ENCODE measurements at regions of chr22 and their contacts with region 1.

Region 1: GRCh38 chr22:22884010-22884887 is 3.4 kb upstream of the IGLL5 start:
- DNase-seq: peak; percentile 80 to 88 (median 82)
- H3K4me3 ChIP-seq: no peak overlapping the region
- H3K27ac ChIP-seq: no peak overlapping the region
- H3K4me1 ChIP-seq: peaks cover 0 to 7% (median 1%) of the 10 kb centered on the region in 4 experiments
- H3K27me3 ChIP-seq: peaks cover 0 to 8% (median 0%) of the 10 kb centered on the region in 5 experiments

Region 2: DNA sequence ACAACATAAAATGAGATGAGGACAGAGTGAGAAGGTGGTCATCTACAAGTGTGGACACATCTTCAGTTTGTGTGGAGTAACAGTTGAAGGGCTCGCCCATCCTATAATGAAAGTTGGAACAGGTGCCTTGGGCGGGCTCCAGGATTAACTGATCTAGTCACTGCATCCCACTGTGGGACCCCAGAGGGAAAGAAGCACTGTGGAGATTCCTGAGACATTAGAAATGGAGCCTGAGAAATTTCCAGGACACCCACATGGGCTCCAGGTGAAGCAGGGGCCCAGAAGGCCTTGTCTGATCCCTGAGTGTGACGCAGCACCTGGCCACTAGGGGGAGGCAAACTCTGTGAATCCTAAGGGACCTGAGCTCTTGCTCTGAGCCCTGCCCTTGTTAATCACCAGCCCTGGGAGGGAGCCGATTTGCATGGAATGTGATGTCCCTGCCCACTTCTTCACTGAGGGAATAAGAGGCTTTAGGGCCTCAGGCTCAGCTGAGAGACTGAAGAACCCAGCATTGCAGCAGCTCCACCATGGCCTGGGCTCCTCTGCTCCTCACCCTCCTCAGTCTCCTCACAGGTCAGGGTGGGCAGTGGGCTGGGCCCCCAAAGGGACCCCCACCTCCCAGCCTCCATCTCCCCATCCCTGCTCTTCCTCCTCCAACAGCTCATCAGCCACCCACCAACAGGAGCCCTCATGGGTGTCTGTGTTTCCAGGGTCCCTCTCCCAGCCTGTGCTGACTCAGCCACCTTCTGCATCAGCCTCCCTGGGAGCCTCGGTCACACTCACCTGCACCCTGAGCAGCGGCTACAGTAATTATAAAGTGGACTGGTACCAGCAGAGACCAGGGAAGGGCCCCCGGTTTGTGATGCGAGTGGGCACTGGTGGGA is 541.3 kb before region 1 on chr22:
- CTCF ChIA-PET with region 1: no interaction called
- POLR2A ChIA-PET with region 1: no interaction called
- DNase-seq: peak; percentile 35 to 43 (median 39)
- H3K4me3 ChIP-seq: no peak overlapping the region
- H3K27ac ChIP-seq: no peak overlapping the region
- H3K4me1 ChIP-seq: peaks cover 0 to 31% (median 21%) of the 10 kb centered on the region in 4 experiments
- H3K27me3 ChIP-seq: no peaks in the 10 kb centered on the region

Region 3: DNA sequence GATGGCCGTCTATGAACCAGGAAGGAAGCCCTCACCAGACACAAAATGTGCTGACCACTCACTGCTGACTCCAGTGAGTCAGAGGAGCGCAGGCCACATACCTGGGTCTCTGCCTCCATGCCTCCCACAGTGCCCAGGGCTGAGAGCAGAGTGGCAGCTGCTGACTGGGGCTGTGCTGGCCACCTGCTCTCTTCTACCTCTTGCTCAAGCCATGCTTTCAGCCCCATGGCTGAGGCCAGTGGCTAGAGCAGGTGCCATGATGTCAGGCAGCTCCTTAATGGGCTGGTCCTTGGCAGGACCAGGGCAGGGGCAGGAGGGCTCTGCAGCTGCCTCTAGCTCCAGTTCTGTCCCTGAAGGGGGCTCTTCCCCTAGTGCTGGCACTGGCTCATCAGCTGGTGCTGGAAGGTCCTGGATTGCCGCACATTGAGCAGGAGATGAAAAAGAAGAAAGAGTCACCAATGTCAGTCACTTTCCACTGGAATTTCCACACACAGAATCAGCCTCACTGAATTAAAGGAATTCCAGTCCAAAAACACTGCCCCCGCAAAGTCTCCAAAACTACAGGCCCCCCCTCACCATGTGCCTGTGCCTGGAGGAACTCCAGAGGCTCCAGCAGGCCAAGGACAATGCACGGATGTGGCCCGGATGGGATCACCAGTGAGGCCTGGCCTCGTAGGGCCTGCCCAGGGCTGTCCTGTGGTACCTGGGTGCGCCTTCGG is 153.4 kb before region 1 on chr22:
- CTCF ChIA-PET with region 1: no interaction called
- POLR2A ChIA-PET with region 1: no interaction called
- DNase-seq: no peak
- H3K4me3 ChIP-seq: no peak overlapping the region
- H3K27ac ChIP-seq: no peak overlapping the region
- H3K4me1 ChIP-seq: no peaks in the 10 kb centered on the region
- H3K27me3 ChIP-seq: no peaks in the 10 kb centered on the region

Region 4: GRCh38 chr22:22753526-22754267 is 130.6 kb before region 1 on chr22:
- CTCF ChIA-PET with region 1: interaction called, 27 read pairs
- POLR2A ChIA-PET with region 1: no interaction called
- DNase-seq: peak; percentile 43 to 76 (median 72)
- H3K4me3 ChIP-seq: no peak overlapping the region
- H3K27ac ChIP-seq: no peak overlapping the region
- H3K4me1 ChIP-seq: peaks cover 0 to 11% (median 8%) of the 10 kb centered on the region in 4 experiments
- H3K27me3 ChIP-seq: peaks cover 0 to 1% (median 0%) of the 10 kb centered on the region in 5 experiments

Region 5: DNA sequence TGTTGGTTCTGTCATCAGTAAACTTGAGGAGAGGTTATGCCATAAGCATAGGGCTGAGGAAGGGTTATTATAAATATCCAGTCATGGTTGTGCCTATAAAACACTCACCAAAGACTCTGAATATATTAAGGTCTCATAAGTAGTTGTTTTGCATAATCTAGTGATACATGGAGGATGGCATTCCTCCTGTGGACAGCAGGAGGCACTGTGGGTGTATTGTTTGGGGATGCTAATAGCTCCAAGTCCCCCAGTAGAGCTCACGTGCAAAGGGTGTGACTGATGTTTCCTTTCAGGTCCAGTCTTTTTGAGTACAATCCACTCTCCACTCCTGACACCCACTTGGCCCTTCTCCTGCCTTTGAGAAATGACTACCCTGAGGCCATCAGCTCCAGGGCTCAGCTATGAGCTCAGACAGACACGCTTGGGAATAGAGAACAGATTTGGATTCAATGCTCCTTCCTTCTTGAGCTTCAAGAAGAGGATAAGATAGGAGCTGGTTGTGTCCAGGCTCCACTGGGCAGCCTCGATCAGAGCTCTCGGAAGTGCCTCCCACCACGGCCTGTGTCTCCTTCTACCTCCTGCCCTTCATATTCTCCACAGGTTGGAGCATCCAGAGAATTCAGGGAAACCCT is 81.8 kb before region 1 on chr22:
- CTCF ChIA-PET with region 1: interaction called, 15 read pairs
- POLR2A ChIA-PET with region 1: no interaction called
- DNase-seq: peak; percentile 48 to 72 (median 65)
- H3K4me3 ChIP-seq: no peak overlapping the region
- H3K27ac ChIP-seq: no peak overlapping the region
- H3K4me1 ChIP-seq: peaks cover 0 to 3% (median 0%) of the 10 kb centered on the region in 4 experiments
- H3K27me3 ChIP-seq: peaks cover 0 to 5% (median 0%) of the 10 kb centered on the region in 5 experiments

Region 6: GRCh38 chr22:22848364-22848866 is 35.8 kb before region 1 on chr22:
- CTCF ChIA-PET with region 1: interaction called, 43 read pairs
- POLR2A ChIA-PET with region 1: no interaction called
- DNase-seq: peak; percentile 48 to 66 (median 52)
- H3K4me3 ChIP-seq: no peak overlapping the region
- H3K27ac ChIP-seq: no peak overlapping the region
- H3K4me1 ChIP-seq: peaks cover 0 to 4% (median 1%) of the 10 kb centered on the region in 4 experiments
- H3K27me3 ChIP-seq: peaks cover 0 to 11% (median 4%) of the 10 kb centered on the region in 5 experiments

Region 7: GRCh38 chr22:22903355-22903777 is 19.1 kb after region 1 on chr22:
- CTCF ChIA-PET with region 1: interaction called, 16 read pairs
- POLR2A ChIA-PET with region 1: no interaction called
- DNase-seq: no peak
- H3K4me3 ChIP-seq: no peak overlapping the region
- H3K27ac ChIP-seq: no peak overlapping the region
- H3K4me1 ChIP-seq: no peaks in the 10 kb centered on the region
- H3K27me3 ChIP-seq: no peaks in the 10 kb centered on the region

Region 8: DNA sequence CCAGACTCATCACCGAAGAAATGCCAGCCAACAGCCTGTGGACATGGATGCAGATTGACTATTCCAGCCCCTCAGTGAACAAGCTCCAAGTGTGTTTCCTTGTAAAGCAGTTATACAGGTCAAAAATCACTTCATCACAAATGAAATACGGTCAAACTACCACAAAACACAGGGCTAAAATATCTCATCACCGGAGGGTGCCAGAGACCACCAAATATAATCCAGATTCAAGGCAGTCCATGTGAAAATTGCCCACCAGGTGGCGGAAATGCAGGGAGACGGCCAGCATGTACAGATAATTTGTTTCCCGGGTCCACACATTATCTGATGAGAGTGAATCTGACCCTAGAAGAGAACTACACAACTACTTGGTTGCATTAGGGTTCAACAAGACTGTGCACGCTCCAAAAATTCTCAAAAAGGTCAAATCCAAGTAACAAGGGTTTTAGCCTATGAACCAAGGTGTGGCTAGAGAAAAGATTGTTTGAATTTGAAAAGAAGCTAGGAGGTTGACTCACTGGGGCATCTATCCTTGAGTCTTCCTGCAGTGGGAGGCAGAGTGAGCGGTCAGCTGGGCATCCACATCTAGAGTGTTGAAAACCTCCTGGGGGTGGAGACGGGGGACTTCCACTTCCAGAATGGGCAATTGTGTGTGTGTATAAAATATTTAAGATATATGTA is 75.0 kb after region 1 on chr22:
- CTCF ChIA-PET with region 1: interaction called, 62 read pairs
- POLR2A ChIA-PET with region 1: no interaction called
- DNase-seq: peak; percentile 86 to 90 (median 86)
- H3K4me3 ChIP-seq: no peak overlapping the region
- H3K27ac ChIP-seq: no peak overlapping the region
- H3K4me1 ChIP-seq: peaks cover 4 to 9% (median 8%) of the 10 kb centered on the region in 4 experiments
- H3K27me3 ChIP-seq: peaks cover 0 to 5% (median 0%) of the 10 kb centered on the region in 5 experiments

Region 9: GRCh38 chr22:22993184-22993583 is 108.9 kb after region 1 on chr22:
- CTCF ChIA-PET with region 1: no interaction called
- POLR2A ChIA-PET with region 1: no interaction called
- DNase-seq: no peak
- H3K4me3 ChIP-seq: no peak overlapping the region
- H3K27ac ChIP-seq: no peak overlapping the region
- H3K4me1 ChIP-seq: no peaks in the 10 kb centered on the region
- H3K27me3 ChIP-seq: peaks cover 0 to 2% (median 0%) of the 10 kb centered on the region in 5 experiments

Measured in common myeloid progenitor, CD34-positive (primary cell).